Adrenal gland (tissue), 19 donors: ENCODE measurements at regions of chr15 and their contacts with region 1.

Region 1: GRCh38 chr15:30940359-30940758 is 36.6 kb downstream of the FAN1 start:
- DNase-seq: no peak
- H3K4me3 ChIP-seq: no peak overlapping the region
- H3K27ac ChIP-seq: no peak overlapping the region
- H3K4me1 ChIP-seq: no peaks in the 10 kb centered on the region
- H3K27me3 ChIP-seq: no peaks in the 10 kb centered on the region
- CTCF ChIP-seq: no peak
- POLR2A ChIP-seq: no peak

Region 2: GRCh38 chr15:31004220-31004733 is 63.9 kb after region 1 on chr15:
- intact Hi-C with region 1: loop called in 1 of 2 experiments (anchors 10 kb)
- DNase-seq: peak in 3 of 7 donors; percentile 38 to 70 (median 49)
- H3K4me3 ChIP-seq: no peak overlapping the region
- H3K27ac ChIP-seq: no peak overlapping the region
- H3K4me1 ChIP-seq: no peaks in the 10 kb centered on the region
- H3K27me3 ChIP-seq: no peaks in the 10 kb centered on the region
- CTCF ChIP-seq: no peak
- POLR2A ChIP-seq: no peak